ENCODE measurements at regions of chr2 and their contacts with region 1.

Region 1: GRCh38 chr2:18520451-18521425 is 39.7 kb downstream of the RDH14 start:
- DNase-seq: peak; percentile 60
- H3K4me3 ChIP-seq: no peak overlapping the region
- CTCF ChIP-seq: peak; percentile 92

Region 2: GRCh38 chr2:18578033-18578432 is 57.3 kb after region 1 on chr2:
- in situ Hi-C with region 1: no loop called
- DNase-seq: no peak
- H3K4me3 ChIP-seq: no peak overlapping the region
- CTCF ChIP-seq: no peak

Region 3: DNA sequence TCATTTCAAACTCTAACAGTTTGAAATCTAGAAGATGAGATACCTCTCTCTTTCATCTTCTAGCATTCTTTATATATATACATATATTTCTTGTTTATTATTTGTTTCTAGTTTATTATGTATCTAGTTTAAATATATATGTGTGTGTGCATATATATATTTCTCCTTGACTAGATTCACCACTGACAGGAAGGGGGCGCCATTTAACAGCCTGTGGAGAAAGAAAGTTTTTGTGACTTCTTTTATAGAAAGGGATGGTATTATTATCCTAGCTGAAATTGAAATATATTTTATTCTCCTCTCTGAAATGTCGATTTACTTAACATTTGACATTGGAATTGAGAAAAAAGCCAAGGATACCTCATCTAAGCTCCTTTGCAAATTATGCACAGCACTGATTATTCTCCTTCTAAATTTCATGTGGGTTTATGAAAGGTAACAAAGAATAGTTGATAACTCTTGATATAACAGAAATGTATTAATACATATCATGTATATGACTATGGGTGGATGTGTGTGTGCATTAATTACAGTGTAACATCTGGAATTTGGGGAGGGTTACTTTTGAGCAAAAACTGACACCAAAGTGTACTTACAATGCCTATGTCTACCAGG is 229.3 kb after region 1 on chr2:
- in situ Hi-C with region 1: loop called (anchors 25 kb)
- DNase-seq: peak; percentile 64
- H3K4me3 ChIP-seq: no peak overlapping the region
- CTCF ChIP-seq: peak; percentile 70

Measured in astrocyte of the cerebellum (primary cell).